ENCODE measurements at regions of chr2 and their contacts with region 1.

Region 1: GRCh38 chr2:77922567-77922966 is 400.4 kb upstream of the LRRTM4 start:
- DNase-seq: no peak
- H3K4me3 ChIP-seq: no peak overlapping the region
- H3K27ac ChIP-seq: no peak overlapping the region
- H3K4me1 ChIP-seq: no peaks in the 10 kb centered on the region
- H3K27me3 ChIP-seq: no peaks in the 10 kb centered on the region
- CTCF ChIP-seq: no peak
- POLR2A ChIP-seq: no peak

Region 2: DNA sequence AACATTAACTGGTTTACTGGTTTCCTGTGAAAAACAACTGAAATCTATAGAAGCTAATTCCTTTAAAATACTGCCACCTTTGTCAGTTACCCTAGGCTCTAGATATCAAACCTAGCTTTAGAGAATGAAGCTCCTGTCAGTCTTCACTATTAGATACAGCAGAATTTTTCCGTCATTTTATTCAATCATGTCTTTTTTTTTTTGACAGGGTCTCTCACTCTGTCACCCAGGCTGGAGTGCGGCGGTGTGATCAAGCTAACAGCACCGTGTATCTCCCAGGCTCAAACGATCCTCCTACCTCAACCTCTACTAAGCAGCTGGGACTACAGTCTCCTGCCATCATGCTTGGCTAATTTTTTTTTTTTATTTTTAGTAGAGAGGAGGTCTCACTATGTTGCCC is 14.8 kb after region 1 on chr2:
- intact Hi-C with region 1: loop called (anchors 2 kb)
- DNase-seq: no peak
- H3K4me3 ChIP-seq: no peak overlapping the region
- H3K27ac ChIP-seq: no peak overlapping the region
- H3K4me1 ChIP-seq: no peaks in the 10 kb centered on the region
- H3K27me3 ChIP-seq: no peaks in the 10 kb centered on the region
- CTCF ChIP-seq: no peak
- POLR2A ChIP-seq: no peak

Region 3: GRCh38 chr2:78301166-78301789 is 378.7 kb after region 1 on chr2:
- intact Hi-C with region 1: no loop called
- DNase-seq: no peak
- H3K4me3 ChIP-seq: no peak overlapping the region
- H3K27ac ChIP-seq: no peak overlapping the region
- H3K4me1 ChIP-seq: no peaks in the 10 kb centered on the region
- H3K27me3 ChIP-seq: no peaks in the 10 kb centered on the region
- CTCF ChIP-seq: no peak
- POLR2A ChIP-seq: no peak